CD4-positive, alpha-beta memory T cell (primary cell): ENCODE measurements at regions of chr14 and their contacts with region 1.

Region 1: GRCh38 chr14:74302634-74303577 is at the start of gene ABCD4:
- DNase-seq: peak; percentile 73 to 85 (median 76)
- H3K4me3 ChIP-seq: peak within 1 kb of the TSS; percentile 58 to 94
- H3K4me3 Mint-ChIP-seq: peak within 1 kb of the TSS; percentile 87 to 99 (median 98)
- H3K27ac ChIP-seq: peak within 1 kb of the TSS; percentile 65
- H3K27ac Mint-ChIP-seq: peak within 1 kb of the TSS; percentile 82 to 98 (median 94)
- H3K4me1 ChIP-seq: peaks cover 29% of the 10 kb centered on the region
- H3K4me1 Mint-ChIP-seq: peaks cover 26 to 51% (median 32%) of the 10 kb centered on the region in 4 donors
- H3K27me3 ChIP-seq: no peaks in the 10 kb centered on the region
- H3K27me3 Mint-ChIP-seq: no peaks in the 10 kb centered on the region
- total RNA-seq, gene ABCD4: 98.3 to 102 TPM

Region 2: GRCh38 chr14:74084277-74085046 is 218.4 kb before region 1 on chr14 and contains the starts of genes ALDH6A1 and LIN52:
- CTCF ChIA-PET with region 1: no interaction called
- POLR2A ChIA-PET with region 1: no interaction called
- intact Hi-C with region 1: loop called (anchors 1 kb)
- DNase-seq: peak; percentile 99 to 100 (median 100)
- H3K4me3 ChIP-seq: peak within 1 kb of the TSS; percentile 68 to 86
- H3K4me3 Mint-ChIP-seq: peak within 1 kb of the TSS; percentile 95 to 99 (median 98)
- H3K27ac ChIP-seq: peak within 1 kb of the TSS; percentile 60
- H3K27ac Mint-ChIP-seq: peak within 1 kb of the TSS; percentile 90 to 99 (median 96)
- H3K4me1 ChIP-seq: peaks cover 25% of the 10 kb centered on the region
- H3K4me1 Mint-ChIP-seq: peaks cover 20 to 48% (median 33%) of the 10 kb centered on the region in 4 donors
- H3K27me3 ChIP-seq: no peaks in the 10 kb centered on the region
- H3K27me3 Mint-ChIP-seq: no peaks in the 10 kb centered on the region
- total RNA-seq, gene ALDH6A1: 21.7 to 22.5 TPM
- total RNA-seq, gene LIN52: 9.4 to 11.0 TPM

Region 3: DNA sequence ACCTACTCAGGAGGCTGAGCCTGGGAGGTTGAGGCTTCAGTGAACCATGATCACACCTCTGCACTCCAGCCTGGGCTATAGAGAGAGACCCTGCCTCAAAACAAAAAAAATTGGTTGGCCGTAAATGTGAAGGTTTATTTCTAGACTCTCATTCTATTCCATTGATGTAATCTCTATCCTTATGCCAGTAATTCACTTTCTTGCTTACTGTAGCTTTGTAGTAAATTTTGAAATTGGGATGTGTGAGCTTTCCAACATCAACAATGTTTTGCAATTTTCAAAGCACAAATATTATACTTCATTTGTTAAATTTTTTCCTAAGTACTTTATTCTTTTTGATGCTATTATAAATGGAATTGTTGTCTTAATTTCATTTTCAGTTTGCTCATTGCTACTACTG is 193.5 kb before region 1 on chr14:
- CTCF ChIA-PET with region 1: no interaction called
- POLR2A ChIA-PET with region 1: no interaction called
- intact Hi-C with region 1: no loop called
- DNase-seq: no peak
- H3K4me3 ChIP-seq: no peak overlapping the region
- H3K4me3 Mint-ChIP-seq: no peak overlapping the region
- H3K27ac ChIP-seq: no peak overlapping the region
- H3K27ac Mint-ChIP-seq: no peak overlapping the region
- H3K4me1 ChIP-seq: no peaks in the 10 kb centered on the region
- H3K4me1 Mint-ChIP-seq: no peaks in the 10 kb centered on the region
- H3K27me3 ChIP-seq: no peaks in the 10 kb centered on the region
- H3K27me3 Mint-ChIP-seq: no peaks in the 10 kb centered on the region

Region 4: DNA sequence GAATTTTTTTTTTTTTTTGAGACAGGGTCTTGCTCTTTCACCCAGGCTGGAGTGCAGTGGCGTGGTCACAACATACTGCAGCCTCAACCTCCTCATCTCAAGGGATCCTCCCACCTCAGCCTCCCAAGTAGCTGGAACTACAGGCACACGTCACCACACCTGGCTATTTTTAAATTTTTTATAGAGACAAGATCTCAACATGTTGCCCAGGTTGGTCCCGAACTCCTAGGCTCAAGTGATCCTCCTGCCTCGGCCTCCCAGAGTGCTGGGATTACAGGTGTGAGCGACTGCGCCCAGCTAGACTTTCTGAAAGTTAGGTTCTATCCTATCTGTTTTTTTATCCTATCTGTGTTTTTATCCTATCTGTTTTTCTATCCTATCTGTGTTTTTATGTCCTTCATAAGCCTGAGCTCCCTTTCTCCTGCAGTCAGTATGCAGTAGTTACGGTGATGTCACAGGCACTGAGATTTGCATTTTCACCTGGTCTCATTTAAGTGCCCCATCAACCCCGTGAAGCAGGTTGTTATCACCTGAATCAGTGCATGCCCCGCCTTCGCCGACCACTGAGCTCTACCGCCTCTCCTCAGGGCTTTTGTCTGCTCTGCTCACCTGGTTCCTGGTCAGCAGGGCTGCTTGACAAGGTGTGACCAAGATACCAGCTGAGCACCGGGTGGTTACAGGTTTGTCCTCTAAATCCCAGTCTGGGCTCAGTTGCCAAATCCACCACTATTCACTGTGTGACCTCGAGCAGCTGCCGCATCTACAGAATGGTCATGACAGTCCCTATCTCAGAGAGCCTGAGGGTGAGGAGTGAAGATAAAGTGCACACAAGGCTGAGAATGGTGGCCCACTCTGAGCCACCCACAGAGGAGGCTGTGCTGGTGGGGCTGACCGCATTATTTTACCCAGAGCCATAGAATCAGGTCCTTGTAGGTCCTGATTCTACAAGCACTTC is 90.0 kb after region 1 on chr14:
- CTCF ChIA-PET with region 1: no interaction called
- POLR2A ChIA-PET with region 1: no interaction called
- intact Hi-C with region 1: no loop called
- DNase-seq: no peak
- H3K4me3 ChIP-seq: no peak overlapping the region
- H3K4me3 Mint-ChIP-seq: no peak overlapping the region
- H3K27ac ChIP-seq: no peak overlapping the region
- H3K27ac Mint-ChIP-seq: peak overlapping the region in 1 of 7 donors; percentile 6
- H3K4me1 ChIP-seq: no peaks in the 10 kb centered on the region
- H3K4me1 Mint-ChIP-seq: no peaks in the 10 kb centered on the region
- H3K27me3 ChIP-seq: no peaks in the 10 kb centered on the region
- H3K27me3 Mint-ChIP-seq: peaks cover 16 to 19% of the 10 kb centered on the region in 2 donors

Region 5: DNA sequence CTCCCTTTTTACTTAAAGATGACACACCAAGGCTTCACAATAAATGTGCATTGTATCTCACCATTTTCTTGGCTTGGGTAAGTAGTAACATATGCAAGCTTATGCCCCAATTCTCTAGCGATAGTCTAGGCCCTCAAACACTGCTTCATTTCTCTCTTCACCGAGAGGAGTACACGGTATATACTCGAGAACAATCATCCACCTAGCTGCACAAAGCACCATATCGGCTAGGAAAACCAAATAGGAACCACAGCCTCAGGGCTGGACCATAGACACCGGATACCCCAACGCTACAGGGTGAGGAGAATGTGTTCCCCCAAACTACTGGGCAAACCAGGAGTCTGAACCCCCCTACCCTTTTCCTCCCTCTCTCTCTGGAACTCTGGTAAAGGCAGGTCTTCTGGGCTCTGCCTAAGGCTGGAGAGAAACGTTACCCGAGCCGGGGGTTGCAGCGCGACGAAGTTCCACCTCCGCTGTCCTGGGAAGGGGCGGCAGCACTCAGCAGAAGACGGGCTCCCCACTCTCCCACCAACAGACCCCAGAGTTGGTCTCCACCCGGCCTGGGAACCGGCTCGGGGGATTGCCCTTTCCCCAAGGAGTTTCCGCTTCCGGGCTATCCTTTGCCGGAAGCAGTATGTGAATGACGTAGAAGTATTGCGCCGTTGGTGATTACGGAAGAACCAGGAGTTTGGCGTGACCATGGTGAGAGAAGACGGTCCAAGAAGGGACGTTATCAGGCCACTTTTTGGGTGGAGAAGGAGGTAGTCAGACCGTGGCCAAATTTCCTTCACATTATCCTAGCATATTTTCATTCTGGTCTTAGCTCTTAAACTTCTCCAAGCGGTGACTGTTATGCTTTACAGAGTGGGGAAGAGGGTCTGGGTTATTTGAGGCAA is 409.8 kb after region 1 on chr14 and contains the starts of genes AREL1 and FCF1:
- CTCF ChIA-PET with region 1: no interaction called
- POLR2A ChIA-PET with region 1: no interaction called
- intact Hi-C with region 1: loop called (anchors 2 kb)
- DNase-seq: peak; percentile 83 to 90 (median 85)
- H3K4me3 ChIP-seq: peak within 1 kb of the TSS; percentile 80 to 83
- H3K4me3 Mint-ChIP-seq: peak within 1 kb of the TSS; percentile 90 to 100 (median 98)
- H3K27ac ChIP-seq: peak within 1 kb of the TSS; percentile 91
- H3K27ac Mint-ChIP-seq: peak within 1 kb of the TSS; percentile 91 to 100 (median 99)
- H3K4me1 ChIP-seq: peaks cover 40% of the 10 kb centered on the region
- H3K4me1 Mint-ChIP-seq: peaks cover 38 to 60% (median 47%) of the 10 kb centered on the region in 4 donors
- H3K27me3 ChIP-seq: no peaks in the 10 kb centered on the region
- H3K27me3 Mint-ChIP-seq: no peaks in the 10 kb centered on the region
- total RNA-seq, gene AREL1: 44.4 to 46.1 TPM
- total RNA-seq, gene FCF1: 57.5 to 57.9 TPM